Activated B cell treated with CpG ODN at 0.5 μM for 24 hours (primary cell): ENCODE measurements at regions of chr11 and their contacts with region 1.

Region 1: DNA sequence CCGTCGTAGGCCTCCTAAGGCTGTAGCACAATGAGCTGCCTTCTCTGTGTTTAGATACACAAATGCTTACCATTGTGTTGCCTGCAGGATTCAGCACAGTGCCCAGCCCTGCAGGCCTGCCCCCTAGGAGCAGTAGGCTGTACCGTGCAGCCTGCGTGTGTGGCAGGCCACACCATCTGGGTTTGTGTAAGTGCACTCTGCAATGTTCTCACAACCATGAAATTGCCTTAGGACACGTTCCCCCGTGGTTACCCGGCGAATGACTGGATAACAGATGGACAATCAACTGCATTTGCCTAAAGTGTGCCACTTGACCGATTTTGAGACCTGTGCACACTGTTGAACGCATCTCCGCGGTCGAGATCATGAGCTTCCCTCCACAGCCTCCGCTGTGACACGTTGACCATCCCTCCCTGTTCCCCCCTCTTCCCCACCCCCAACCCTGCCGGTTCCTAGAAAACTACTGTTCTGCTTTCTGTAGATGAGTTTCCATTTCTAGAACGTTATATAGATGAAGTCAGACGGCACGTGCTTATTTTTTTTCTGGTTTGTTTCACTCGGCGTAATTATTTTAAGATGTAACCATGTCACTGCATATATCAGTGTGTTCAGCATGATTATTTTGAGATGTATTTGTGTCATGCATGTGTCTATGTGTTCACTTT is 22.2 kb upstream of the CTSD start:
- DNase-seq: no peak
- ATAC-seq: no peak
- H3K4me3 Mint-ChIP-seq: no peak overlapping the region
- H3K27ac Mint-ChIP-seq: no peak overlapping the region
- H3K4me1 Mint-ChIP-seq: peaks cover 9% of the 10 kb centered on the region
- H3K27me3 Mint-ChIP-seq: peaks cover 2% of the 10 kb centered on the region
- CTCF ChIP-seq: no peak

Region 2: GRCh38 chr11:1772270-1773130 is 13.4 kb before region 1 on chr11:
- CTCF ChIA-PET with region 1: no interaction called
- POLR2A ChIA-PET with region 1: no interaction called
- intact Hi-C with region 1: no loop called
- DNase-seq: no peak
- ATAC-seq: peak; percentile 49
- H3K4me3 Mint-ChIP-seq: no peak overlapping the region
- H3K27ac Mint-ChIP-seq: no peak overlapping the region
- H3K4me1 Mint-ChIP-seq: peaks cover 6% of the 10 kb centered on the region
- H3K27me3 Mint-ChIP-seq: peaks cover 39% of the 10 kb centered on the region
- CTCF ChIP-seq: no peak

Region 3: GRCh38 chr11:1796413-1797011 is 10.6 kb after region 1 on chr11:
- CTCF ChIA-PET with region 1: no interaction called
- POLR2A ChIA-PET with region 1: interaction called, 13 read pairs
- intact Hi-C with region 1: no loop called
- DNase-seq: no peak
- ATAC-seq: no peak
- H3K4me3 Mint-ChIP-seq: no peak overlapping the region
- H3K27ac Mint-ChIP-seq: no peak overlapping the region
- H3K4me1 Mint-ChIP-seq: peaks cover 2% of the 10 kb centered on the region
- H3K27me3 Mint-ChIP-seq: peaks cover 23% of the 10 kb centered on the region
- CTCF ChIP-seq: no peak

Region 4: DNA sequence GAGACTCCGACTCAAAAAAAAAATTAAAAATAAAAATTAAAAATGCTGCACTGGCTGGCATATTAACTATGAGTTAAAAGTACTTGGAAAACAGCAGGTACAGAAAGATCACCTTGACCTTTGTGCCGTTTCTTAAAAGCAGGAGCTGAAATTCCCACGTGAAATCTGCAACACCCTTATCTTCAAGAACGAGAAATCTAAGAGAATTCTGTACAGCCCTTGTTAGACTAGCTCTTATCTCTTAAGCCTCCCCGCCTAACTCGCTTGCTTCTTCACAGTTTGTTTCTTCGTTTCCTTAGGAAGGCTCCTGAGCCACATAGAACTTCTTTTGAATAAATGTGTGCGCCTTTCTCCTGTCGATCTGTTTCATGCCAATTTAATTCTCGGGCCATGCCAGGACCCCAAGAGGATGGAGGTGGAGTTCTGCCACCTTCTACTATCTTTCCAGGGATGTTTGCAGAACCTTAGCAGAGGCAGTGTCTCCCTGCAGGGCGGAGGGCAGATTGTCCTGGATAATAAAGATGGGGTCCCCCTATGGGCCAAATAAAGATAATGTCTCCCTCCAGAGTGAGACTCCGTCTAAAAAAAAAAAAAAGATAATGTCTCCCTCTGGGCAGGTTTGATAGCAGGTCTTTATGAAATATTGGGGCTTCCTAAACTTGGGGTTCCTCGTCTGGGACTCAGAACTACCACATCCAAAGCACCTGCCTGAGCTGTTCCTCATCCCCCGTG is 21.5 kb after region 1 on chr11:
- CTCF ChIA-PET with region 1: no interaction called
- POLR2A ChIA-PET with region 1: no interaction called
- intact Hi-C with region 1: no loop called
- DNase-seq: no peak
- ATAC-seq: no peak
- H3K4me3 Mint-ChIP-seq: no peak overlapping the region
- H3K27ac Mint-ChIP-seq: no peak overlapping the region
- H3K4me1 Mint-ChIP-seq: no peaks in the 10 kb centered on the region
- H3K27me3 Mint-ChIP-seq: peaks cover 14% of the 10 kb centered on the region
- CTCF ChIP-seq: no peak

Region 5: DNA sequence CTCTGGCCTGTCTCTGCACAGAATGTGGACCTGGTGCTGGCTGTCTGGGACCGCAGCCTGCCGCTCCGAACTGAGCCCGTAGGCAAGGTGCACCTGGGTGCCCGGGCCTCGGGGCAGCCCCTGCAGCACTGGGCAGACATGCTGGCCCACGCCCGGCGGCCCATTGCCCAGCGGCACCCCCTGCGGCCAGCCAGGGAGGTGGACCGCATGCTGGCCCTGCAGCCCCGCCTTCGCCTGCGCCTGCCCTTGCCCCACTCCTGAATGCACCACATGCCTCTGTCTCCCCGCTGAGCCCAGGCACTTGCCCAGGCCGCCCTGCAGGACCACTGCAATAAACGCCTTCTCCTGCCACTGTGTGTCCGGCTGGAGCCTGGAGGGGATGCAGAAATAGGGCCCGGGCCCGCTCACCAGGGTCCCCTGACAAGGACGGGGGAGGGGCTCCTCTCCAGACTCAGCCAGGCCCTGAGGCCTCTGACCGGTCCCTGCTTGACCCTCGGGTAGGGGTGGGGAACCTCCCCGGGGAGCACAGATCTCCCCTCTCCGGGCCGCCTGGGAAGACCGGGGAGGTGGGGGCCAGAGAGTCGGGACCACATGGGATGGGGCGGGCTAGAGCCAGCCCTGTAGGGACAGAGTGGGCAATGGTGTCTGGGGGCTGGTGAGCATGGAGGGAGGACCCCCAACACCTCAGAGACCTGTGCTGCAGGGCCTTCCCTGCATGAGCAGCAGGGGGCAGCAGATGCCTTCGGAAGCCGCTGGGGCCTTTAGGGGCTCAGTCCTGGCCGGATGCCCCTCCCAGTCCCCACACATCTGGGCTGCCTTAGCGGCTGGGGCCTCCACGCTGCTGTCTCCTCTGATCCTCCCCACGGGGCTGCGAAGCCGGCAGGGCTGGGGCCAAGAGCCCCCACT is 51.5 kb after region 1 on chr11:
- CTCF ChIA-PET with region 1: no interaction called
- POLR2A ChIA-PET with region 1: no interaction called
- intact Hi-C with region 1: no loop called
- DNase-seq: peak; percentile 76
- ATAC-seq: peak; percentile 80
- H3K4me3 Mint-ChIP-seq: no peak overlapping the region
- H3K27ac Mint-ChIP-seq: no peak overlapping the region
- H3K4me1 Mint-ChIP-seq: peaks cover 29% of the 10 kb centered on the region
- H3K27me3 Mint-ChIP-seq: peaks cover 3% of the 10 kb centered on the region
- CTCF ChIP-seq: peak; percentile 83

Region 6: DNA sequence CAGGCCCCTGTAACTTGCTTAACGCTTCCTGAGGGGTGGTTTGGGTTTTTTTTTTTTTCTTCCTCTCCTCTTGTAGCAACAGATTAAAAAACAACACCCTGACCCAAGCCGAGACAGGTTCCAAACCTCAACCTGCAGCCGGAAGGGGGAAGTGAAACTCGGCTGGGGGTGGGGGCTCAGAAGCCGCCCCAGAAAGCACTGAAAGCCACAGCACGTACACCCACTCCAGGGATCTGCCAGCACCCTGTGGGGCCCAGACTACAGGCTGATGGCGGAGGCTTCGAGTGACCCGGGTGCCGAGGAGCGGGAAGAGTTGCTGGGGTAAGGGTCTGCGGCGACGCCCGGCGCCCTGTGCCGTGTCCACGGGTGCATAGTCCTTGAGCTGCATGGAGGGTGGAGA is 67.0 kb after region 1 on chr11 and contains the start of gene LSP1:
- CTCF ChIA-PET with region 1: no interaction called
- POLR2A ChIA-PET with region 1: no interaction called
- intact Hi-C with region 1: no loop called
- DNase-seq: peak; percentile 83
- ATAC-seq: peak; percentile 64
- H3K4me3 Mint-ChIP-seq: peak within 1 kb of the TSS; percentile 99
- H3K27ac Mint-ChIP-seq: peak within 1 kb of the TSS; percentile 98
- H3K4me1 Mint-ChIP-seq: peaks cover 84% of the 10 kb centered on the region
- H3K27me3 Mint-ChIP-seq: no peaks in the 10 kb centered on the region
- CTCF ChIP-seq: no peak
- total RNA-seq, gene LSP1: 301 and 303 TPM in 2 replicates